ENCODE measurements at regions of chr1 and their contacts with region 1.

Region 1: DNA sequence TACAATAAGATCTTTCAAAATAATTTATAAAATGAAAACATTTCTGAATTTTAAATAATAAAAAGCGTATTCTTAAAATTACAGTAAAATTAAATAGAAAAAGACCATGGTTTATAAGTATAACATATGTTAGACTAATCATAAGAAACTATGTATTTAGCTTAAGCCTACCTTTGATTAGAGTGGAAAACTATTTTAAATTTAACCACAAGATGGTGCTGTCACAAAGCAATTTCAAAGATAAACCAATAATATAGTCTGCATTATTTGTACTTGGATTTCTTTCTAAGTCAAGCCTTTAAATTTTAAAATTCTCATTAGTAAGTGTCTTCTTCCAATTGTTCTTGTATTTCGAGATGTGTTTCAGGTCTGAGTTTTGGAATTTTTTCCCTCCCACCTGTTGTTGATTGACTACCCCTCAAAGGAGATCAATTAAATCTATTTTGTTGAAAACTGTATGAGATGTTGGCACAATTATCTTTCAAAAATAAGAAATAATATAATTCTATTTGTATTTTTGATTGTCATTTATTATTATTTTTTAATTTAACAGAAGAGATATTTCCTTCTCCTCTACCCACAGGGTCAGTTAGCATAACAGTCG is 459.8 kb downstream of the KCNT2 start:
- DNase-seq: peak; percentile 12
- H3K4me3 ChIP-seq: 0 out of 4 replicates have a peak overlapping the region, but pooled peaks of 1 of the 2 experiments have one; percentile 9
- H3K27ac ChIP-seq: no peak overlapping the region
- H3K4me1 ChIP-seq: no peaks in the 10 kb centered on the region; a peak in 2 of 4 replicates
- H3K27me3 ChIP-seq: no peaks in the 10 kb centered on the region
- CTCF ChIP-seq: peak; percentile 74
- EP300 ChIP-seq: no peak
- RAD21 ChIP-seq: peak; percentile 78

Region 2: DNA sequence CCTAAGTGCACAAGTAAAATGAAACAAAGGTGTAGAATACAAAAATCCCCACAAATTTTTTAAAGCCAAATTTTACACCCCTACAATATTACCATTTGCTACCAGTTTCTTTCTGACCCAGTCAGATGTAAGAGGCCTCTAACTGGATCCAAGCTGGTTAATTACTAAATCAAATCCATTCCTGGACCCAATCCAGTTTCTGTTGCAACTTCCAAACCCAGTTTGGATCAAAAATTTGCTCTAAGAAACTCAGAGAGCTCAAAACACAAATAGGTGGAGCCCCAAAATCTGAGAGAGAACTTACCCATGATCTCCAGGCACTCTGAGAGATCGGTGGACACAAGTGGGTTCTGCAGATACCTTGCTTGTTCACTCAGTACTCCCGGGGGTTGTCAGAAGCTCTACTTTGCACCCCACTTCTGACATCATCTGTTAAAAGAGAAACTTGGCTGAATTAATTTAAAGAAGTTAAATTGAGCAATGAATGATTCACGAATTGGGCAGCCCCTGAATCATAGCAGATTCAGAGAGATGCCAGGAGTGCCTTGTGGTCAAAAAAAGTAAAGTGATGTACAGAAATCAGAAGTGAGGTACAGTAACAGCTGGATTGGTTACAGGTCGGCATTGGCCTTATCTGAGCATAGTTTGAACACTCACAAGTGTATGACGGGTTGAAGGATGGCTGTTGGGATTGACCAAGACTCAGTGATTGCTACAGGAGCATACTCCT is 11.8 kb after region 1 on chr1:
- CTCF ChIA-PET with region 1: interaction called, 16 read pairs
- POLR2A ChIA-PET with region 1: no interaction called
- DNase-seq: no peak
- H3K4me3 ChIP-seq: no peak overlapping the region
- H3K27ac ChIP-seq: peak overlapping the region in 1 of 2 experiments; percentile 35; a peak in 2 of 4 replicates
- H3K4me1 ChIP-seq: no peaks in the 10 kb centered on the region
- H3K27me3 ChIP-seq: no peaks in the 10 kb centered on the region
- CTCF ChIP-seq: no peak
- EP300 ChIP-seq: 0 out of 4 replicates have a peak, but pooled peaks of 1 of the 2 experiments have one; percentile 45
- RAD21 ChIP-seq: no peak

Region 3: DNA sequence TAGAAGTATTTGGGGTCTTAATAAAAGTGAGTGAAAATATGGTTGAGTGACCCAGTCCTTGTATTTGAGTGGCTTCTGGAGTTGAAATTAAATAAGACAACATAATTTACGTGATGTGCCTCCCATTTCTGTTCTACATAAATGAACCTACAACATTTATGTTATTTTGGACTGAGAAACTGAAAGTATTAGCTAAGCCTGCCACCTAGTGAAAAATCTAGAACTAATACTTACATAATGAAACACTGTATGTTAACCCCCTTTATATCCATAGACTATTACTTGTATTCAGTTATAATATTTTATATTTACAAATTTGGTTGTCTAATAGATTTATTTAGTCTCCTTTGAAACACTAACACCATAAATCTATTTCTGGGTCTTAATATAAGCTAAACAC is 160.9 kb after region 1 on chr1:
- CTCF ChIA-PET with region 1: interaction called, 26 read pairs
- POLR2A ChIA-PET with region 1: no interaction called
- DNase-seq: no peak
- H3K4me3 ChIP-seq: no peak overlapping the region
- H3K27ac ChIP-seq: no peak overlapping the region
- H3K4me1 ChIP-seq: no peaks in the 10 kb centered on the region; a peak in 1 of 4 replicates
- H3K27me3 ChIP-seq: no peaks in the 10 kb centered on the region
- CTCF ChIP-seq: peak; percentile 68
- EP300 ChIP-seq: no peak
- RAD21 ChIP-seq: peak; percentile 71